ENCODE measurements at regions of chr15 and their contacts with region 1.

Region 1: DNA sequence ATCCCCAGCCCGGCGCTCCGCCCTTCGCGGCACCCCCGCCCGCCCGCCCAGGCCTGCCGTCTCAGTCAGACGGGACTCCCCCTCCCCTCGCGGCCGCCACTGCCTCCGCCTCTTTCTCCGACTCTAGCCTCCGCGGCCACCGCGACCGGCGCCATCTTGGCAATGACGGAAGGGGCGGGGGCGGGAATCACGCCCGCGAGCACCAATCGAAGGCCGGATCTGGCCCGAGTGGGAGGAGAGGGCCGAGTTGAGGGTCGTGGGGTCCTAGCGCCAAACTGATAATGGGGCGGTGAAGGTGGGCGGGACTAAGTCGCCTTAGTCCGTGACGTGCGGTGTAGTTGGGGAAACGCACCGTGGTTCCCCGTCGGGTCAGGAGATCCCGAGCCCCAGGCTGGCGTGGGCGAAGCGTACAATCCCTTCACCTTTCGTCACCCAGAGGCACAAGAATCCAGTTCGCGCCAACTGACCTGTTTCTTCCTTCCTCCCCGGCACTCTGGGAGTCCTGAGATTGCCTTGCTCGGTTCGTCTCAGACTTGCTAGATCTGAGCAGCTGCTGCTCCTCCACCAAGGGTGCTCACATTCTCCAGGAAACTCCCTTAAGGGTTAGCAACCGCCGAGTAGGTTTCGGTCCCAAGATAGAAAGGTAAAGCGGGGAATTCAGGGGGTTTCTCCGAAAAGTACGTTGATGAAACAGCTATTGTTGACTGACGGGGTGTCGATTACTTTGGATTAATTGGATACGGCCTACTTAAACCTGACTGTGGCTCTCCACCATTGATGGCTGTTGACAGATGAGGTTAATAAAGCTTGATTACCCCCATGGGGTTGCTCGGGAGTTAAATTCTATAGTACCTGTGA is at the start of gene DENND4A:
- DNase-seq: peak; percentile 99
- ATAC-seq: peak; percentile 82
- H3K4me3 Mint-ChIP-seq: peak within 1 kb of the TSS; percentile 82
- H3K27ac Mint-ChIP-seq: peak within 1 kb of the TSS; percentile 93
- H3K4me1 Mint-ChIP-seq: peaks cover 62% of the 10 kb centered on the region
- H3K27me3 Mint-ChIP-seq: no peaks in the 10 kb centered on the region
- total RNA-seq, gene DENND4A: 40.1 to 45.0 TPM

Region 2: GRCh38 chr15:65400760-65401610 is 391.4 kb before region 1 on chr15:
- CTCF ChIA-PET with region 1: no interaction called
- POLR2A ChIA-PET with region 1: no interaction called
- DNase-seq: peak; percentile 64
- ATAC-seq: peak; percentile 86
- H3K4me3 Mint-ChIP-seq: no peak overlapping the region
- H3K27ac Mint-ChIP-seq: no peak overlapping the region
- H3K4me1 Mint-ChIP-seq: peaks cover 6% of the 10 kb centered on the region
- H3K27me3 Mint-ChIP-seq: peaks cover 51% of the 10 kb centered on the region

Region 3: GRCh38 chr15:65730549-65731172 is 61.7 kb before region 1 on chr15:
- CTCF ChIA-PET with region 1: no interaction called
- POLR2A ChIA-PET with region 1: no interaction called
- DNase-seq: no peak
- ATAC-seq: no peak
- H3K4me3 Mint-ChIP-seq: no peak overlapping the region
- H3K27ac Mint-ChIP-seq: no peak overlapping the region
- H3K4me1 Mint-ChIP-seq: no peaks in the 10 kb centered on the region
- H3K27me3 Mint-ChIP-seq: no peaks in the 10 kb centered on the region

Region 4: GRCh38 chr15:65778269-65778668 is 14.1 kb before region 1 on chr15:
- CTCF ChIA-PET with region 1: interaction called, 3 read pairs
- POLR2A ChIA-PET with region 1: interaction called, 18 read pairs
- DNase-seq: no peak
- ATAC-seq: peak; percentile 49
- H3K4me3 Mint-ChIP-seq: peak overlapping the region; percentile 26
- H3K27ac Mint-ChIP-seq: peak overlapping the region; percentile 75
- H3K4me1 Mint-ChIP-seq: peaks cover 33% of the 10 kb centered on the region
- H3K27me3 Mint-ChIP-seq: no peaks in the 10 kb centered on the region

Region 5: DNA sequence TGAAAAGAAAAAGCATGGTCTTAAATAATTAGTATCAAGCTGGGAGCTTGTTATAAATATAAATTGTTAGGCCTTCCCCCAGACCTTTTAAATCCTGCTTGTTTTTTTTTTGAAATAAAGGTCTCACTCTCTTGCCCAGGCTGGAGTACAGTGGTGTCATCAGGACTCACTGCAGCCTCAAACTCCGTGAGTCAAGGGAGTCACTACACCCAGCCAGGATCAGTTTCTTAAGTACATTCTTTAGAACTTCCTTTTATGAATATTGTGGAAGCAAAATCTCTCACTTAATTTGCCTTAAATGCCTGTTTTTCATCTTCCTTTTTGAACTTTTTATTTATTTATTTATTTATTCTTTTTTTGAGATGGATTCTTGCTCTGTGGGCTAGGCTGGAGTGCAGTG is 20.6 kb after region 1 on chr15:
- CTCF ChIA-PET with region 1: interaction called, 19 read pairs
- POLR2A ChIA-PET with region 1: interaction called, 99 read pairs
- DNase-seq: peak; percentile 16
- ATAC-seq: no peak
- H3K4me3 Mint-ChIP-seq: no peak overlapping the region
- H3K27ac Mint-ChIP-seq: no peak overlapping the region
- H3K4me1 Mint-ChIP-seq: peaks cover 26% of the 10 kb centered on the region
- H3K27me3 Mint-ChIP-seq: no peaks in the 10 kb centered on the region

Region 6: GRCh38 chr15:65824031-65824743 is 31.8 kb after region 1 on chr15:
- CTCF ChIA-PET with region 1: interaction called, 35 read pairs
- POLR2A ChIA-PET with region 1: interaction called, 99 read pairs
- DNase-seq: peak; percentile 37
- ATAC-seq: no peak
- H3K4me3 Mint-ChIP-seq: no peak overlapping the region
- H3K27ac Mint-ChIP-seq: no peak overlapping the region
- H3K4me1 Mint-ChIP-seq: peaks cover 61% of the 10 kb centered on the region
- H3K27me3 Mint-ChIP-seq: no peaks in the 10 kb centered on the region

Region 7: GRCh38 chr15:65869127-65869953 is 77.0 kb after region 1 on chr15 and contains the start of gene RAB11A:
- CTCF ChIA-PET with region 1: interaction called, 5 read pairs
- POLR2A ChIA-PET with region 1: interaction called, 35 read pairs
- DNase-seq: peak; percentile 98
- ATAC-seq: peak; percentile 94
- H3K4me3 Mint-ChIP-seq: peak within 1 kb of the TSS; percentile 99
- H3K27ac Mint-ChIP-seq: peak within 1 kb of the TSS; percentile 94
- H3K4me1 Mint-ChIP-seq: peaks cover 28% of the 10 kb centered on the region
- H3K27me3 Mint-ChIP-seq: peaks cover 4% of the 10 kb centered on the region
- total RNA-seq, gene RAB11A: 163 to 168 TPM

Measured in activated CD8-positive, alpha-beta T cell treated with anti-CD3 and anti-CD28 coated beads, Interleukin-2, amount 10 ng/mL, durations not matched to agents 7 days and 5 days (primary cell).